Posterior cingulate gyrus (tissue), 11 donors: ENCODE measurements at regions of chr19 and their contacts with region 1.

Region 1: GRCh38 chr19:13262450-13262849 is 112.2 kb downstream of the IER2 start:
- DNase-seq: no peak

Region 2: GRCh38 chr19:12974301-12975220 is 287.9 kb before region 1 on chr19:
- intact Hi-C with region 1: loop called (anchors 2 kb)
- DNase-seq: peak in 1 of 10 donors; percentile 66

Region 3: GRCh38 chr19:13150187-13150930 is 112.1 kb before region 1 on chr19 and contains the starts of genes IER2 and STX10:
- intact Hi-C with region 1: loop called (anchors 1 kb)
- DNase-seq: peak; percentile 95 to 99 (median 97)

Region 4: GRCh38 chr19:13195678-13196077 is 66.8 kb before region 1 on chr19:
- intact Hi-C with region 1: loop called (anchors 5 kb)
- DNase-seq: no peak